ENCODE measurements at regions of chr11 and their contacts with region 1.

Region 1: DNA sequence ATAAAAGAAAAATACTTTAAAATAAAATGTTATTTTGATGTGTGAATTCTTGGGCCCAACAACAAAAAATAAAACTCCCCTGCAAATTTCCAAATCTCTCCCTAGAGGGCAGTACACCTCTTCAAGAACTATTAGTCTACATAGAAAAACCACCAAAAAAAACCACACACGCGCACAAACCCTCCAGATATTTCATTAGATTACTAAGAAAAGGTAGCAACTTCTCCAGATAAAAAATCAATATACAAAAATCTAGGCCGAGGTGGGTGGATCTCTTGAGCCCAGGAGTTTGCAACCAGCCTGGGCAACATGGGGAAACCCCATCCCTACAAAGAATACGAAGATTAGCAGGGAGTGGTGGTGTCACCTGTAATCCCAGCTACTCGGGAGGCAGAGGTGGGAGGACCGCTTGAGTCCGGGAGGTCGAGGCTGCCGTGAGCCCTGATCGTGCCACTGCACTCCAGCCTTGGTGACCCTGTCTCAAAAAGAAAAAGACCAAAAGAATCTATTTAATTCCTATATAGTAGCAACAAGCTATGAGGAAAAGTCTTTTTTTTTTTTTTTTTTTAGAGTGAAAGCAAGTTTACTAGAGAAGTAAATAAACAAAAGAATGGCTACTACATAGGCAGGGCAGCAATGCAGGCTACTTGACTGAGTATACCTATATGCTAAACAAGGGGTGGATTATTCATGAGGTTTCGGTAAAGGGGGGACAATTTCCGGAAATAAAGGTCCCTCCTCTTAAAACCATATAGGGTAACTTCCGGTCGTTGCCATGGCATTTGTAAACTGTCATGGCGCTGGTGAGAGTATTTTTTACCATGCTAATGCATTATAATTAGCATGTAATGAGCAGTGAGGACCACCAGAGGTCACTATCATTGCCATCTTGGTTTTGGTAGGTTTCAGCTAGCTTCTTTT is 13.1 kb downstream of the B3GNT6 start:
- DNase-seq: peak; percentile 84
- H3K4me3 ChIP-seq: peak overlapping the region in 3 of 4 donors; percentile 22 to 51 (median 33)
- H3K27ac ChIP-seq: peak overlapping the region; percentile 78 to 84 (median 81)
- H3K4me1 ChIP-seq: peaks cover 4 to 33% (median 20%) of the 10 kb centered on the region in 4 donors
- H3K27me3 ChIP-seq: peaks cover 7% of the 10 kb centered on the region
- CTCF ChIP-seq: peak; percentile 69 to 90 (median 78)
- EP300 ChIP-seq: no peak
- POLR2A ChIP-seq: no peak

Region 2: GRCh38 chr11:75826461-75827230 is 1220.6 kb before region 1 on chr11:
- in situ Hi-C with region 1: no loop called
- intact Hi-C with region 1: no loop called
- DNase-seq: no peak
- H3K4me3 ChIP-seq: no peak overlapping the region
- H3K27ac ChIP-seq: peak overlapping the region; percentile 75 to 81 (median 76)
- H3K4me1 ChIP-seq: peaks cover 25 to 62% (median 41%) of the 10 kb centered on the region in 4 donors
- H3K27me3 ChIP-seq: no peaks in the 10 kb centered on the region
- CTCF ChIP-seq: no peak
- EP300 ChIP-seq: no peak
- POLR2A ChIP-seq: no peak

Region 3: DNA sequence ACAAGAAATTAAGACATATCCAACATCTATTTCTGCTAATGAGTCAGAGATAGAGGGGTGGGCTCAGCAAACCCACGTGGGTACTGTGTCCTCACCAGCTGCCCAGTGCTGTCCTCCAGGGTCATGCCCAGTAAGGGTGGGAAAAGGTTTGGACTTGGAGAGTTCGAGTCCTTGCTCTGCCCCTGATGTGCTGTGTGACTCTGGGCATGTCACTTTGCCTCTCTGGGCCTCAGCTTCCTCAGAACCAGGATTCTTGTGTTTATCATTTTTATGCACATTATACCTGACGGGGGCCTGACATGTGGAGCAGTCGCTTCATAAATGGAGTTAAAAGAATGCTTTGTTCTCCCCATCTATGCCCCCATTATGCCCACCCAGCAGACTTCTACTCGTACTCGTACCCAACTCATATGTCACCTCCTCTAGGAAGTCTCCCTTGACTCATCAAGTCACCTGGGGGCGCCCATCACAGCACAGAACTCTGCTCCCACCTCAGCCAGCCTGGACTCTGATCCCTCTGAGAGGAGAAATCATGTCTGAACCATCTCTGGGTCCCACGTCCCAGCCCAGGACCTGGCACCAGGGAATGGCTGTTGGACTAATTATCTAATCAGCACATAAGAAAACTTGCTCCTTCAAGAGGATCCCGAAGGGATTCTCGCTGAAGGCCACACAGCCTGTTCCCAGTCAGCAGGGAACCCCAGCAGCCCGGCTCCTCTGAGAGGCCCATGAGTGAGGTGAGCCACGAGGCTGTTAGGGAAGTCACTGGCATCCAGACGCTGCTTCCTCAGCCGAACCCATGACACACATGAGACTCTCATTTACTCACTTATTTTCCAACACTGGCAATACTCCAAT is 302.9 kb before region 1 on chr11:
- in situ Hi-C with region 1: loop called in 1 of 4 experiments (anchors 25 kb)
- intact Hi-C with region 1: no loop called
- DNase-seq: peak; percentile 33
- H3K4me3 ChIP-seq: no peak overlapping the region
- H3K27ac ChIP-seq: peak overlapping the region in 3 of 4 donors; percentile 40 to 73 (median 61)
- H3K4me1 ChIP-seq: peaks cover 4 to 21% (median 13%) of the 10 kb centered on the region in 4 donors
- H3K27me3 ChIP-seq: no peaks in the 10 kb centered on the region
- CTCF ChIP-seq: no peak
- EP300 ChIP-seq: no peak
- POLR2A ChIP-seq: no peak

Region 4: GRCh38 chr11:76807206-76807875 is 239.9 kb before region 1 on chr11:
- in situ Hi-C with region 1: loop called in 2 of 4 experiments (anchors 25 kb)
- intact Hi-C with region 1: no loop called
- DNase-seq: peak; percentile 89
- H3K4me3 ChIP-seq: peak overlapping the region in 1 of 4 donors; percentile 22
- H3K27ac ChIP-seq: no peak overlapping the region
- H3K4me1 ChIP-seq: peaks cover 0 to 20% (median 10%) of the 10 kb centered on the region in 4 donors
- H3K27me3 ChIP-seq: no peaks in the 10 kb centered on the region
- CTCF ChIP-seq: peak; percentile 71 to 86 (median 78)
- EP300 ChIP-seq: no peak
- POLR2A ChIP-seq: no peak

Region 5: GRCh38 chr11:76919887-76920746 is 127.2 kb before region 1 on chr11:
- in situ Hi-C with region 1: loop called in 1 of 4 experiments (anchors 10 kb)
- intact Hi-C with region 1: no loop called
- DNase-seq: peak; percentile 79
- H3K4me3 ChIP-seq: peak overlapping the region in 1 of 4 donors; percentile 33
- H3K27ac ChIP-seq: peak overlapping the region; percentile 54 to 83 (median 70)
- H3K4me1 ChIP-seq: peaks cover 3 to 32% (median 15%) of the 10 kb centered on the region in 4 donors
- H3K27me3 ChIP-seq: no peaks in the 10 kb centered on the region
- CTCF ChIP-seq: peak; percentile 84 to 92 (median 89)
- EP300 ChIP-seq: no peak
- POLR2A ChIP-seq: no peak

Region 6: DNA sequence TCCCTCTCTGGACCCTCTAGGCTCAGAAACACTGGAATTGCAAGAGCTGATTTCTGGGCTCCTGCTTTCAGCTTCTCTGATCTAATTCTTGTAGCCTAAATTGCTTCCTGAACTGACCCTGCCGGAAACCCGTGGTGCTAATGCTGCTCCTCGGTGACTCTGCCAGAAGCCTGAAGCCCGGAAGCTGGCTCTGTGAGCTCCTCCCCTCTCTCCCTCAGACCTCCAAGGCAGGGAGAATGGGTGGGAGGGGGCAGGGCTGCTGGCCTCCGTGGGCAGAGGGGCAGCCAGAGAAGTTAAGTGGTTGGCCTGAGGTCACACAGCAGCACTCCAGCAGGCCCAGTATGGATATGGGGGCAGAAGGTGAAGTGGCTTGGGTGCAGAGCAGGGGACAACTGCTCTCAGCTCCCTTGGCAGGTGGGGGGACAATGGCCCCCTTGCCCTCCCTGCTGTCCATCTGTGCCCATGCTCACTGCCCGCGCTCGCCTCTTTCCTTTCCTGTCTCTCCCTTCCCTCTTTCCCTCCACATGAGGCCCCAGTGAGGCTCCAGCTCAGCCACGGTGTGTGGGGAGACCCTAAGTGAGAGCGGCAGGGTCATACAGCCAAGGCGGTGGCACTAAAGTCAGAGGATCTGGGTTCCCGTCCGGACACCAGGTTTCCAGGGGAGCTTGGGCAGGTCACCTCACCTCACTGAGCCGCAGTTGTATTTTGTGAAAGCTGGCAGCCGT is 35.7 kb after region 1 on chr11:
- in situ Hi-C with region 1: loop called in 1 of 4 experiments (anchors 5 kb)
- intact Hi-C with region 1: no loop called
- DNase-seq: peak; percentile 69
- H3K4me3 ChIP-seq: no peak overlapping the region
- H3K27ac ChIP-seq: peak overlapping the region; percentile 81 to 94 (median 88)
- H3K4me1 ChIP-seq: peaks cover 38 to 78% (median 60%) of the 10 kb centered on the region in 4 donors
- H3K27me3 ChIP-seq: no peaks in the 10 kb centered on the region
- CTCF ChIP-seq: no peak
- EP300 ChIP-seq: no peak
- POLR2A ChIP-seq: no peak

Region 7: GRCh38 chr11:77091146-77091940 is 44.1 kb after region 1 on chr11:
- in situ Hi-C with region 1: loop called in 2 of 4 experiments (anchors 5 kb)
- intact Hi-C with region 1: loop called (anchors 1 kb)
- DNase-seq: peak; percentile 92
- H3K4me3 ChIP-seq: no peak overlapping the region
- H3K27ac ChIP-seq: peak overlapping the region; percentile 88 to 94 (median 94)
- H3K4me1 ChIP-seq: peaks cover 39 to 74% (median 54%) of the 10 kb centered on the region in 4 donors
- H3K27me3 ChIP-seq: no peaks in the 10 kb centered on the region
- CTCF ChIP-seq: peak; percentile 91 to 98 (median 96)
- EP300 ChIP-seq: no peak
- POLR2A ChIP-seq: no peak

Region 8: DNA sequence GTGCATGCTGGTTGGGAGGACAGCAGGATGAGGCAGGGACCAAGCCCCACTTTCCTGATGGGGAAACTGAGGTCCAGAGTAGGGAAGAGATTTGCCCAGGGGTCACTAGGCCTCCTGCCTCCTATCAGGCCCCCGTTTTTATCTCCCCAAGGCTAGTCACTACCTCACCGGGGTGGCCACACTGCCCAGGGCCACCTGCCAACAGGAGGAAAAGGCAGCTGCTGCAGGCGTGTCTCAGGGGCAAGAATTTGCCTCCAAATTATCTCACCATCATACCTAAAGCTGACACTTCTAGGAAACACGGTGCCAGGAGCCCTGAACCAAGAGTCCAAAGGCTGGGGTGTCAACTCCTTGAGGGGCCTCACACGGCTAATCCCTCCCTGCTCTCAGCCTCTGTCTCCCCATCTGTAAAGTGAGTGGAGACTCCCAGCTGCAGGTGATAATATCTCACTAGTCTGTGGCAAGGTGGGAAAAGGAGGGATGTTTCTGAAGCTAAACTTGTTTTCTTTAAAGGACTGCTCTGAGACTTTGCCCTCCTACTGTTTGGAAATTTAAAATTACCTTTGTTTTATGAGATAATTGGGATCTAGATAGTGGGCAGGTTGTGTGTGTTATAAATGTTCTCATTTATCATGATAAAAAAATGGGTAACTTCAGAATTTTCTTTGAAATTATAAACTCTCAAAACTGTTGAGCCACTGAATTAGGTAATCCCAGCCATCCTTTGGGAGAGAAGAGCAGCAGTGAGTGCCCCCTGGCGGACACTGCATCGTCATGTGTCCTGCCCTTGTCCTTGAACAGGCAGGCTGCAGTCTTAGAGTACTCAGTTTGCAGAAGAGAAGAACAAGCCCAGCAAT is 140.7 kb after region 1 on chr11:
- in situ Hi-C with region 1: loop called in 2 of 4 experiments (anchors 10 to 25 kb)
- intact Hi-C with region 1: loop called (anchors 10 kb)
- DNase-seq: peak; percentile 88
- H3K4me3 ChIP-seq: no peak overlapping the region
- H3K27ac ChIP-seq: peak overlapping the region; percentile 44 to 65 (median 58)
- H3K4me1 ChIP-seq: peaks cover 4 to 28% (median 16%) of the 10 kb centered on the region in 4 donors
- H3K27me3 ChIP-seq: no peaks in the 10 kb centered on the region
- CTCF ChIP-seq: peak; percentile 83 to 93 (median 87)
- EP300 ChIP-seq: no peak
- POLR2A ChIP-seq: no peak

Measured in transverse colon (tissue), 4 donors.